ENCODE measurements at regions of chr11 and their contacts with region 1.

Region 1: DNA sequence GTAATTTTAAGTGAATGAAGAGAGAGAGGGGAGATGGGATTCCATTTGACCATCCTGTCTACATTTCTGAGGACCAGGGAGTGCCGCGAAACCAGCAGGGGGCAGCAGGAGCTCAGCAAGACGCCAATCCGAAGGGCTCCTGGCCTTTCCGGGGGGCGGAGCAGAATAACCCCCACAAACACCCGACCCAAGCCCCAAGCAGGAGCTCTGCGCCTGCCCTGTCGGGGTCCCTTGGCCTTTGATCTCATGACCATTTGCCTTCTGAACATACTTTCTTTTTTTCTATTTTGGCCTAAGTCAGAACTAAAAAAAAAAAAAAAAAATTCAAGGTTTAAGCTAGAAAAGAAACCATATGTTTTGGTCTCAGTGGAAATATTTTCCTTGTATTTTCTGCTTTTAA is 21.9 kb upstream of the SCN2B start:
- DNase-seq: peak; percentile 83 to 92
- H3K4me3 ChIP-seq: peak overlapping the region in 1 of 4 donors; percentile 20
- H3K27ac ChIP-seq: peak overlapping the region in 1 of 5 donors; percentile 16
- H3K4me1 ChIP-seq: peaks cover 9 to 43% (median 25%) of the 10 kb centered on the region in 4 donors
- H3K27me3 ChIP-seq: no peaks in the 10 kb centered on the region
- CTCF ChIP-seq: peak in 5 of 7 experiments; percentile 77 to 92 (median 81)
- EP300 ChIP-seq: no peak
- POLR2A ChIP-seq: no peak

Region 2: DNA sequence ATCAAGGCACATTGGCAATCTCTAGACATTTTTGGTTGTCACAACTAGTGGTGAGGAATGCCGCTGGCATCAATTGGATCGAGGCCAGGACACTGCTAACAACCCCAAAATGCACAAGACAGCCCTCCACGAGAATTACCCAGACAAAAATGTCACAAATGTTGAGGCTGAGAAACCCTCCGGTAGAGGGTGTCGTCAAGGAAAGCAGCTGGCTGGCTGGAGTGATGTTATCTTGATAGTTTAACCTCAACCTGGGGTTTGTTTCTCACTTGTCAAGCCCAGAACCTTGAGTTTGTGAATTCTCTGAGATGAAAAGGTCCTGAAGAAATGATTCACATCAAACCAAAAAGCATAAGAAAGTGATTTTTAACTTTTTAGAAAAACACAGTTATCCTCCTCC is 248.1 kb before region 1 on chr11:
- intact Hi-C with region 1: no loop called
- DNase-seq: peak in 1 of 2 donors; percentile 58
- H3K4me3 ChIP-seq: no peak overlapping the region
- H3K27ac ChIP-seq: peak overlapping the region in 2 of 5 donors; percentile 10 to 46
- H3K4me1 ChIP-seq: peaks cover 0 to 13% (median 6%) of the 10 kb centered on the region in 4 donors
- H3K27me3 ChIP-seq: peaks cover 0 to 24% (median 0%) of the 10 kb centered on the region in 3 donors
- CTCF ChIP-seq: no peak
- EP300 ChIP-seq: no peak
- POLR2A ChIP-seq: no peak

Region 3: DNA sequence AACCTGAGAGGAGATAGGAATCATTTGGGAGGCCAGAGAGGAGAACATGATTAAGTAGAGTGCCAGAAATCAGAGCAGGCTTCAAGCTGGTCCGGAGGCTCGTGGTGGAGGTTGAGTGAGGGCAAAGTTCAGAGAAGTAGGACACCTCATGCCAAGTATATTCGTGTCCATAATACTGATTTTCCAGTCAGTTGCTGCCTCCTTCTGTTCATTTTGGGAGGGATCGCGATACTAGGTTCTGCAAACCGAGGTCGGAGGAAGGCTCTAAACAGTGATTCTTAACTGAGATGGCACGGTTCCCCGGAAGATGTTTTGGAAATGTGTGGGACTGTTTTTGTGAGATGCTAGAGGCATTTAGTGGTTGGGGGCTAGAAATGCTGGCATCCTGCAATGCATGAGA is 92.6 kb after region 1 on chr11:
- intact Hi-C with region 1: loop called (anchors 10 kb)
- DNase-seq: peak; percentile 45 to 70
- H3K4me3 ChIP-seq: no peak overlapping the region
- H3K27ac ChIP-seq: no peak overlapping the region
- H3K4me1 ChIP-seq: peaks cover 0 to 11% (median 3%) of the 10 kb centered on the region in 4 donors
- H3K27me3 ChIP-seq: peaks cover 0 to 13% (median 0%) of the 10 kb centered on the region in 3 donors
- CTCF ChIP-seq: peak in 4 of 7 experiments; percentile 12 to 81 (median 60)
- EP300 ChIP-seq: no peak
- POLR2A ChIP-seq: no peak

Region 4: DNA sequence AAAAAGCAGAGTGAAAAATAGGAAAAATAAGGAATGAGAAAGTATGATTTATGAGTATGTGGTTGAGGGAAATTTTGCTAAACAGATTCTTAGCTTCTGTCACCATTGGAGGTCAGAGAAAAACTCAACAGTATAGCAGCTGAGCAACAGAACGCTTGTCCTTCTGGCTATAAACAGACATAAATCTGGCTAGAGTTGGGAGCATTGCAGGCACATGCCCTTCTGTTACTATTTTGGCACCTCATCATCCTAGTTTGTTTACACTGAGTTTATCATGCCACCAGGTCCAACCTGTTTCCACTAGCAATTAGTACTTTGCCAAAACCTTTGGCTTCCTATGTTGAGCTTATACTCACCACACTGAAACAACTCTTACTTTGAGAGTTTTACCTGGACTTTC is 167.9 kb after region 1 on chr11:
- intact Hi-C with region 1: loop called (anchors 10 kb)
- DNase-seq: no peak
- H3K4me3 ChIP-seq: no peak overlapping the region
- H3K27ac ChIP-seq: no peak overlapping the region
- H3K4me1 ChIP-seq: peaks cover 0 to 26% (median 14%) of the 10 kb centered on the region in 4 donors
- H3K27me3 ChIP-seq: no peaks in the 10 kb centered on the region
- CTCF ChIP-seq: no peak
- EP300 ChIP-seq: no peak
- POLR2A ChIP-seq: no peak

Measured in stomach (tissue), 19 donors.